Right ventricle myocardium inferior (tissue), 1 donor: ENCODE measurements at regions of chr14 and their contacts with region 1.

Region 1: DNA sequence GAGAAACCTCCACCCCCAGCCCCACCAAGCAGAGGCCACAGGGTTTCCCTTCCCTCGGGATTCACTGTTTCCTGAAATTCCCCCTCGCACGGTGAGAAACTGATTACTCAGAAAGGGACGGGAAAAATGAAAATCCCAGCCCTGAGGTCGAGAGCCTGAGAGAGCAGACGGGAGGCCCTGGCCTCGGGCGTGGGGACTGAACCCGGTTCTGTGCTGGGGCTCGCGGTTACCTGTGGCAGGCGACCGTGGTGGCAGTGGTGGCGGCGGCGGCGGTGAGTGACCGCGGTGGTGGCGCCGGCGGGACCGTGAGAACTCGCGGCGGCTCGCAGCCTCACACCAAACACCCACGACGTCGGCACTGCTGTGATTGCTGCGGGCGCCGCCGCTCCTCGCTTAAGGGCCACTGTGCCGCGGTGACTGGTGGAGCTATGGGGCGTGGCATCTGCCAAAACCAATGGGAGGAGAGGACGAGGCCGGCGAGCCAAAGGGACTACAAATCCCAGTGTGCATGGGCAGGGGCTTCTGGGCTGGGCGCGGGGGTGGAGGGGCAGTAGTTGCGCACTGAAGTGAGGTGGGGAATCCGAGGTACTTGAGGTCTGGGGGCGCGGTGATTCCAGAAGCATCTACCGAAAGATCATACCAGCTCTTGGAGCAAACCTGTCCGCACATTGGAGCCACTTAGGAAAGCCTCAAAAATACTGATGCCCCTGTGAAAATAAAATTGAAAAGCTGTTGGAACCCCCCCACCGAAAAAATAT is at the start of gene LGMN:
- DNase-seq: peak; percentile 97
- ATAC-seq: peak; percentile 99
- total RNA-seq, gene LGMN: 122 TPM

Region 2: DNA sequence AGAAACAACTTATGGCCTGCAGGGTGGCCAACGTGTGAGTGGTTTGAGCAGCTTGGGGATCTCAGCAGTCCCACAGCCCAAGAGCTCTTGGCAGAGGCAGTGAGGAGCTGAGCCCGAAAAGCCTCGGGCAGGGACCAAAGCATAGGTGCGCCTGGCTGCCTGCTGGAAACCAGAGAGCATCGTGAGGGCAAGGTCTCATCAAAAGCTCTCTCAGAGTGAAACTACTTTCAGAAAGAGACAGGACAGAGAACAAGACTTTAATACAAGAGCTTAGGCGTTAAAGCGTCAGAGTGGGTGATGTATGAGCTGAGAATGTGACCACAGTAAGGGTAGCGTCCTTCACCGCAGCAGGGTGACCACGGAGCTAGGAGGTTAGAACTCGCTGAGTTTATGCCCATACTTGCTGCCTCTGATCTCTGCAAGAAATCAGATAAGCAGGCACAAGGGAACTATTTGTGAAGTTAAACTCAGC is 30.8 kb before region 1 on chr14:
- intact Hi-C with region 1: loop called (anchors 5 kb)
- DNase-seq: no peak
- ATAC-seq: no peak

Region 3: DNA sequence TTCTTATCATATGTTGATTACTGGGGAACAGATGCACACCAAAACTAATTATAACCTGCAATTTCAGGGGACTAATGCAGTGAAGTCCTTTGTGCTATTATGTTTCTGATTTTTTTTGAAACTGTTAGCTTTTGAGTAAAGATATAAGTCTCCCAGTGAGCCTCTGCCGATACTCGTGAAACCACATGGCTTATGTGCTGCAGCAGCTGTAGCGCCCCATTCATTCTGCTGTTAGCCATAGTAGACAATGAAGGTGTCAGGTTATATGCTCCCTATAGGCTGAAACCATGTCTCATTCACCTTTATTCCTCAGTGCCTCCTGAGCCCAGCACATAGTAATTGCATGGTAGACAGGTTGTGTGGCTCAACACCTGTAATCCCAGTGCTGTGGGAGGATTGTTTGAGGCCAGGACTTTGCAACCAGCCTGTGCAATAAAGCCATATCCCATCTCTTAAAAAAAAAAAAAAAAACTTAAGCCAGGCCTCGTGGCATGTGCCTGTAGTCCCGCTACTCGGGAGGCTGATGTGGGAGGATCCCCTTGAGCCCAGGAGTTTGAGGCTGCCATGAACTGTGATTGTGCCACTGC is 70.7 kb after region 1 on chr14:
- intact Hi-C with region 1: no loop called
- DNase-seq: no peak
- ATAC-seq: no peak

Region 4: DNA sequence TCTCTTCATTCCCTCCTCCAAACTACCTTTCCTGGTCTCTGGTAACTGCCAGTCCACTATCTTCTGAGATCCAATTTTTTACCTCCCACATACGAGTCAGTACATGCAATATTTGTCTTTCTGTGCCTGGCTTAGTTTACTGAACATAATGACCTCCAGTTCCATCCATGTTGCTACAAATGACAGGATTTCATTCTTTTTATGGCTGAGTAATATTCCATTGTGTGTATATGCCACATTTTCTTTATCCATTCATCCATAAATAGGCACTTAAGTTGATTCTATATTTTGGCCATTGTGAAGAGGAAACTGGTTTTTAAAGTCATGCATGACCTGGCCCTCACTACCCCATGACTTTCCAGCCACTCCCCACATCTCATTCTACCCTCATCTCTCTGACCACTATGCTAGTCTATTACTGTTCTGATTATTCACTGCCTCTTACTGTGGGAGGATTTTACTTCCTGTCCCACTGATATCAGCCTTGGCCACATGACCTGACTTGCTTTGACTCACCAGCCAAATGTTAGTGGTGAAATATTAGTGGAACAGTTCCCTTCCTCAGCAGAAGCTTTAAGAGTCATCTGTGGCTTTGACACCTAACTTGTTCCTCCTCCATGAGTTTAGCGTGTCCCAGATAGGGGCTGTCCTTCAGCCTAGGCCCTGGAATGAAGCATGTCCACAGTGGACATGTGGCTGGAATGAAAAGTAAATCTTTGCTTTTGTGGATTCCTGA is 97.9 kb after region 1 on chr14:
- intact Hi-C with region 1: no loop called
- DNase-seq: no peak
- ATAC-seq: peak; percentile 81

Region 5: GRCh38 chr14:92982956-92983355 is 234.5 kb after region 1 on chr14:
- intact Hi-C with region 1: no loop called
- DNase-seq: no peak
- ATAC-seq: no peak